Right cardiac atrium (tissue), 5 donors: ENCODE measurements at regions of chr3 and their contacts with region 1.

Region 1: DNA sequence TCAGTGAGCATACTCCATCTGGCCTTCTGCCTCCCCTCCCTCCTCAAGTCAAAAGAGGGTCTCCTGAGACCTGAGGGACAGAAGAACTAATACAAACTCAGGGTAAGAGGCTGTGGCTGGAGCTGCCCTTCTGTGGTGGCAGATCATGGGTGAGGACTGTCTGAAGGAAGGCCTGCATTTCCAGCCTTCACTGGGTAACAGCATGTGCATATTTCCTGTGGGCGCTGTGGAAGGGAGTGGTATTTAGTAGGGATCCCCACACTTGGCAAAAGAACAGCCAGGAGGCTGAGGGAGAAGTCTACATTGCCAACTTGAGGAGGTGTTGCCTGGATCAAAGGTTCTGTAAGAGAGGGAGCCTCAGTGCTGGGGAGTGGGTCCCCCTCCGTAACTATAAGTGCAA is 10.1 kb upstream of the ESYT3 start:
- DNase-seq: no peak
- ATAC-seq: no peak
- H3K4me3 ChIP-seq: no peak overlapping the region
- H3K27ac ChIP-seq: no peak overlapping the region
- H3K4me1 ChIP-seq: no peaks in the 10 kb centered on the region
- H3K27me3 ChIP-seq: no peaks in the 10 kb centered on the region

Region 2: DNA sequence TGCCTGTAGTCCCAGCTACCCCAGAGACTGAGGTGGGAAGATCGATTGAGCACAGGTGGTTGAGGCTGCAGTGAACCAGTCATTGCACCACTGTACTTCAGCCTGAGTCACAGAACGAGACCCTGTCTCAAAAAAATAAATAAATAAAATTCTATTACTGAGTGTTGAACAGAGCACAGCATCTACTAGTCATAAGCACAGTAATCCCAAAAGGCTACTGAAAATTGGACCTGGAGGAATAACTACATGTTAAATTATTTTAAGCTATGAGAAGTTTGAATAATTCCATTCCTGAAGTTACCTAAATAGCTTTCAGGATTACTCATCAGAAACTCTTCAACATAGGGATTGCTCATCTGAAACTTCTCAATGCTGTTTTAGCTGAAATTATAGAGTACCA is 193.8 kb before region 1 on chr3:
- intact Hi-C with region 1: no loop called
- DNase-seq: no peak
- ATAC-seq: no peak
- H3K4me3 ChIP-seq: no peak overlapping the region
- H3K27ac ChIP-seq: no peak overlapping the region
- H3K4me1 ChIP-seq: no peaks in the 10 kb centered on the region
- H3K27me3 ChIP-seq: no peaks in the 10 kb centered on the region

Region 3: GRCh38 chr3:138338811-138339210 is 85.5 kb before region 1 on chr3:
- intact Hi-C with region 1: loop called in 1 of 4 experiments (anchors 5 kb)
- DNase-seq: peak in 1 of 3 donors; percentile 61
- ATAC-seq: peak; percentile 56 to 71
- H3K4me3 ChIP-seq: no peak overlapping the region
- H3K27ac ChIP-seq: no peak overlapping the region
- H3K4me1 ChIP-seq: peaks cover 3% of the 10 kb centered on the region
- H3K27me3 ChIP-seq: no peaks in the 10 kb centered on the region